ENCODE measurements at regions of chr4 and their contacts with region 1.

Region 1: GRCh38 chr4:24419181-24420034 is 164.9 kb downstream of the DHX15 start:
- DNase-seq: peak; percentile 41
- ATAC-seq: peak; percentile 90
- H3K4me3 ChIP-seq: no peak overlapping the region
- H3K27ac ChIP-seq: no peak overlapping the region
- H3K4me1 ChIP-seq: no peaks in the 10 kb centered on the region
- H3K27me3 ChIP-seq: no peaks in the 10 kb centered on the region; the same call in 1 of the 2 replicates
- CTCF ChIP-seq: peak; percentile 58 to 97 (median 92); a peak in 5 of 6 replicates
- POLR2A ChIP-seq: no peak
- RAD21 ChIP-seq: peak; percentile 83

Region 2: DNA sequence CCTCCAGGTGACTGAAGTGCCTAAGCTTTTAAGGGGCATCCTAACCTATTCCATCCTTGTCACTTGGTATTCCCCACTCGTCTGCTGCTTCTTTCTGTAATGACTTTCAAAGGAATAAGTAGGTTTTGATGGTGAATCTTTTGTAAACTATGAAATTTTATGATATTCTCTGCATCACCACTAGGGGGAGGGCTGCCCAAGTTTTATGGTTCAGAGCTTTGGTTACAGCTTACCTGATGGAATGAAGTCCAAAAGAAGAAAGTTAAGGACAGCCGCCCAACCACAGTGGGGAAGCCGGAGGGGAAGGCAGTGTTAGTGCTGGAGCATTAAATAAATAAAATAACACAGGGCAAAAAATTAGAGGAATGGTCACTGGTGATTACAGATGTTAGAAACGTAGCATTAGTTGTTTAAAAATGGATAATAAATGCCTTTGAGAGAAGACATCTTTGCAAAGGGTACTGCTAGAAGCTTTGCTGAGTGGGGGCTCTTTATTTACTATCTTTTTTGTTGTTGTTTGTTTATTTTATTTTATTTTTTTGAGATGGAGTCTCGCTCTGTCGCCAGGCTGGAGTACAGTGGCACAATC is 1521.8 kb before region 1 on chr4:
- CTCF ChIA-PET with region 1: interaction called, 7 read pairs
- POLR2A ChIA-PET with region 1: no interaction called
- RAD21 ChIA-PET with region 1: no interaction called
- intact Hi-C with region 1: loop called (anchors 1 kb)
- DNase-seq: peak; percentile 3
- ATAC-seq: no peak
- H3K4me3 ChIP-seq: no peak overlapping the region
- H3K27ac ChIP-seq: no peak overlapping the region
- H3K4me1 ChIP-seq: no peaks in the 10 kb centered on the region
- H3K27me3 ChIP-seq: no peaks in the 10 kb centered on the region
- CTCF ChIP-seq: peak; percentile 11 to 82 (median 56); a peak in 3 of 6 replicates
- POLR2A ChIP-seq: no peak
- RAD21 ChIP-seq: peak; percentile 33; the same call in 1 of the 2 replicates

Region 3: DNA sequence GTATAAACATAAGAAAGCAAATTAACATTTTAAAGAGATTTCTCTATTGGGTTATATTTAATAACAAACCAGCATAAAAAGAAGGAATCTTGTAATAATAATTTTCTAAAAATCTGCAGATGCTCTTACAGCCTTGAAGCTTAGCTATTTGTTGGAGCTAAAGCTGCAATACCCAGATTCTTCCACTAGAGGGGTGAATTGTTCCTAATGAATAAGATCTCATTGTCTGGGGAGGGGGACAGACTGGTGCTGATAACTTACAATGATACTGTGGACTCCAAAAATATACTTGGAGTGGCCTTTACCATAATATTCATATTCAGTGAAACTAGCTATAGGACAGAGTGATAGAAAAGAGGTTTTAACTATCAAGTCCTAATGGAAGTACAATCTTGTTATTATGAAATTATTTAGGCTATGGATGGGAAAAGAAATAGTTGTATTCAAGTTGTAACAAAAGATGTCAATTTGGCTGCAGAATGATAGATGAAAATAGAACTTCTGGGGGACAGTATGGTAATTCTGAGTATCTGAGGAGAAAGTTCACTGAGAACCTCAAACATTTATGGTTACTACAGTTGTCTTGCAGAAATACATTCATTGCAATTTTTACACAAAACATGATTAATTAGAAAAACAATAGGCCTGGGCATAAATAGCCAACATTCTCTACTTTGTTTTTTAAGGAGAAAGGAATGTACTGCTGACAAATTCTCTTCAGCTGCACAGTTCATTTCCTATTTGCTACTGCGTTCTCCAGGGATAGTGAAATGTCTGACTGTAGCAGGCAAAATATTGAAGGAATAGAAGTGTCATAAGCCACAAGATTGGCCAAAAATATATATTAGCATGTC is 1283.4 kb before region 1 on chr4:
- CTCF ChIA-PET with region 1: interaction called, 4 read pairs
- POLR2A ChIA-PET with region 1: no interaction called
- RAD21 ChIA-PET with region 1: no interaction called
- intact Hi-C with region 1: loop called (anchors 1 kb)
- DNase-seq: peak; percentile 12
- ATAC-seq: no peak
- H3K4me3 ChIP-seq: no peak overlapping the region
- H3K27ac ChIP-seq: no peak overlapping the region
- H3K4me1 ChIP-seq: no peaks in the 10 kb centered on the region
- H3K27me3 ChIP-seq: no peaks in the 10 kb centered on the region
- CTCF ChIP-seq: peak in 2 of 3 experiments; percentile 56 to 65; a peak in 4 of 6 replicates
- POLR2A ChIP-seq: no peak
- RAD21 ChIP-seq: peak; percentile 22; the same call in 1 of the 2 replicates